ENCODE measurements at regions of chr1 and their contacts with region 1.

Region 1: DNA sequence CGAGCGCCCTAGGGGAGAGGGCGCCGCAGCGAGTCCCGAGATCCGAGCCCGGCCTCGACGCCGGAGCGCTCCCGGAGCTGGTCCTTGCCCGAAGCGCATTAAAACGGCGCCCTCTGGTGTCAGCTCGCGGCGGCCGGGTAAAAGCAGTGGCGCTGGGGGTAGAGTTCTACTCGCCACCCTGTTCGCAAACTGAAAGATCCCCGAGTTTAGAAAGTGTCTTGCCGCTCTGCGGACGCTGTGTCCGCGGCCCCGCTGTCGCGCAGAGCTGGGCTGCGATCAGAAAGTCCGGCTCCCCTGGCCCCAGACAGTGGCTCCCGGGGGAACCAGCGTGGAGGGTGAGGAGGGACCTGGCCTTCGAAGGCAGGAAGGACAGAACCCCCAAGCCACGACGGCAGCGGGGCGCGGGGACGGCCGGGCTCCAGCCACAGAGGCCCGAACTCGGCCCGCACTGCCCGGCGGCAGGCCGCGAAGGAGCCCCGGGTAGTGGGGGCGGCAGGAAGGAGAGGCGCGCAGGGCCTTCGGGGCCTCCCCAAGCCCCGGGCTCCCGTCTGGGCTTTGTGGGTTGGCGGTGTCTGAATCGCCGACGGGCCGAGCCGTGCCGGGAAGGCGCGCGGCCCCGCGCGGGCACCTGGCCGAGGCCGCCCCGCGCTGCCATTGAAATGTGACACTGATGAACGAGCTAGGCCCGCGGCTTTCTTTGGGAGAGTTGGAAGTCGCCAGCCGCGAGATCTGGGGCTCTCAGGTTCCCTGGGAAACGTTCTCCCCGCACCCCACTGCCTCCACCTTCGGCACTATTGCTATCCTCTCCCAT is 39.1 kb upstream of the NFIA start:
- DNase-seq: peak; percentile 64
- H3K4me3 Mint-ChIP-seq: peak overlapping the region; percentile 31
- H3K27ac Mint-ChIP-seq: no peak overlapping the region
- H3K4me1 Mint-ChIP-seq: peaks cover 12% of the 10 kb centered on the region
- H3K27me3 Mint-ChIP-seq: no peaks in the 10 kb centered on the region
- CTCF ChIP-seq: peak; percentile 77

Region 2: DNA sequence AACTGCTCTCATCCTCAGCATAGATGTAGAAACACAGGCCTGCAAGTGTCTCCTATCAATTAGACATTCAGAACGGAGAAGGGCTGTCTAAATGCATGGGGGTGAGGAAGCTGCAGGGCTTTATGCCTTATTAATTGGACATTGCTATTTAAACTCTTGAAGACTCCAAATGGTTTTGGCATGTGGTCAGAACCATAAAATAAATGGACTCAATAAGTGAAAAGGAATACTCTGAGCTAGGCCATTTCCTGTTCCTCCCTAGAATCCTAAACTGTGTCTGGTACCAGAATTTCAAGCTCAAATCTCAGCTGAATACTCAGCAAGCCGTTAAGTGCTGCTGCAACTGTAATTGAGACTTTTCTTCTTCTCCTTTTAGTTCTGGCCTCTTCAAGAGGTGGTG is 889.3 kb before region 1 on chr1:
- CTCF ChIA-PET with region 1: interaction called, 4 read pairs
- POLR2A ChIA-PET with region 1: no interaction called
- intact Hi-C with region 1: loop called (anchors 2 kb)
- DNase-seq: no peak
- H3K4me3 Mint-ChIP-seq: no peak overlapping the region
- H3K27ac Mint-ChIP-seq: no peak overlapping the region
- H3K4me1 Mint-ChIP-seq: no peaks in the 10 kb centered on the region
- H3K27me3 Mint-ChIP-seq: peaks cover 22% of the 10 kb centered on the region
- CTCF ChIP-seq: no peak

Region 3: GRCh38 chr1:60848583-60849188 is 194.5 kb before region 1 on chr1:
- CTCF ChIA-PET with region 1: interaction called, 28 read pairs
- POLR2A ChIA-PET with region 1: no interaction called
- intact Hi-C with region 1: loop called (anchors 1 kb)
- DNase-seq: peak; percentile 38
- H3K4me3 Mint-ChIP-seq: no peak overlapping the region
- H3K27ac Mint-ChIP-seq: no peak overlapping the region
- H3K4me1 Mint-ChIP-seq: peaks cover 13% of the 10 kb centered on the region
- H3K27me3 Mint-ChIP-seq: peaks cover 20% of the 10 kb centered on the region
- CTCF ChIP-seq: peak; percentile 71

Region 4: DNA sequence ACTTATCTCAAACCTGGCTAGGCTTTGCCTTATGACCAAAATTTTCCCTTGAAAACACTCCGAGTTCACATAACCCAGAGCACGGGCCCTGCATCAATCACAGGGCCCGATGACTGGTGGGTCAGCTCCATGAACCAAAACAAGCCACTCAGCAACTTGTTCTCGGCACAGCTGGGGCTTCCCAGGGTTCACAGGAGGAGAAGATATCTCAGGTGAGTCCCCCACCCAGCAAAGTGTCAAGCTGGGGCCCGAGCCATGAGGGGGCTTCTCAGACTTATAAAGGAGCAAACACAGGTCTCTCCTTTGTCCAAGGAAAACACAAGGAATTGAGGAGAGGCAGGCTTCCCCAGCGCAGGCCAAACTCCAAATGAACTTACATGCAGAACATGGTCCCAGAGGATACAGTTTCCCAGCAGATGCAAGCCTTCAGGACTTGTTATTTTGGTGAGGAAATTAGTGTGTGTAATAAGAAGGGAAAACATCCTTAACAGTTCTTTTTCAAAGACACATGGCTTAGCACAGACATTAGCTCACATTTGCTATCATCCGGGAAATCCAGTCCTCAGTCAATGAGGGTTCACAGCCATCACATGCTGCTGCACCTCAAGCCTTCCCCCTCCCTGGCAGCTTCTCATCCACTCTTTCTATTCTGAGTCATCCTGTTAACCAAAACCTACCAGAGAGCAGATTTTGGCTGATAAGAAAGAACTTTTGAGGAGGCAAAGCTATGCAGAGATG is 59.0 kb before region 1 on chr1:
- CTCF ChIA-PET with region 1: interaction called, 100 read pairs
- POLR2A ChIA-PET with region 1: interaction called, 9 read pairs
- intact Hi-C with region 1: loop called (anchors 1 kb)
- DNase-seq: no peak
- H3K4me3 Mint-ChIP-seq: no peak overlapping the region
- H3K27ac Mint-ChIP-seq: no peak overlapping the region
- H3K4me1 Mint-ChIP-seq: no peaks in the 10 kb centered on the region
- H3K27me3 Mint-ChIP-seq: no peaks in the 10 kb centered on the region
- CTCF ChIP-seq: no peak

Region 5: DNA sequence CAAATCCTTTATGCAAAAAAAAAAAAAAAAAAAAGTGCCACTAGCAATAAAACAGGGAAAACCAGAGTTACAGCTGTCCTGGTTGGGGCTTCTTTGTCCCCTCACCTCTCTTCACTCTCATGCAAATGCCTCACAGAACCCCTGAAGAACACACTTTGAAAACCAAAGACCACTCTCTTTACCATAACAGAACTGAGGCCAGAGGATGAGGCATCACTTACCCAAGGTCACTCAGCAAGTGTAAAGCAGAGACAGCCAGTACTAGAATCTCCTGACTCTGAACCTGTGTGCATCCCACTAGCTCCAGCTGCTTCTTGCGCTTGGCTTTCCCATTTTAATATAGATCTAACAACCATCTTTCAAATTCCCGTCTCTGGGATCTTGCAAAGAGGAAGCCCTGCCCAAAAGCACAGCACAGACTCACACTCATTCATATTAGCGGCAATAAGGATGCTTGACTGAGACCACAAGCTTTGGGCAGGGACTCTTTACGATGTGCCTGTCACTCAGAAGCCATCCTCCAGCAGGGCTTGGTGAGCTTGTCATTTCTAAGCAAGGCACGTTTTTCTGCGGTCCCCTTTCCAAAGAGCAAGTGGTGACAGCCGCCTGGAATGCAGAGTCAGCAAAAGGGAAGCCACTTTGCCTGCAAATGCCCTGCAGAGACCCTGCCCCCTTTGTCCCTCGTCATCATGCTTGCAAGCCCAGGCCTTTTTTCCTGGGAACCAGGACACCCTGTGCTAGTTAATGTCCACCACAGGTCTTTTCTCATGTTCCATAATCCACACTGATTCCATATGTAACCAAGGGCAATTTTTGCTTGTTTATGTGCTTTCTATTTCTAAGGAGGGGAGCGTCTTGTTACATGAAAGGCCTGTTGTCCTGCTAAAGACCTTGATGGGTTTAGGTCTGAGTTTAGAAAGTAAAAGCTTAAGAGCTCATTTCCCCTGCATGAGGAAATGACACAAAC is 37.3 kb before region 1 on chr1:
- CTCF ChIA-PET with region 1: interaction called, 15 read pairs
- POLR2A ChIA-PET with region 1: no interaction called
- intact Hi-C with region 1: no loop called
- DNase-seq: no peak
- H3K4me3 Mint-ChIP-seq: no peak overlapping the region
- H3K27ac Mint-ChIP-seq: no peak overlapping the region
- H3K4me1 Mint-ChIP-seq: no peaks in the 10 kb centered on the region
- H3K27me3 Mint-ChIP-seq: no peaks in the 10 kb centered on the region
- CTCF ChIP-seq: no peak